SK-N-SH (cell line): ENCODE measurements at regions of chr7 and their contacts with region 1.

Region 1: GRCh38 chr7:1137510-1138167 is 22.4 kb downstream of the ZFAND2A start:
- DNase-seq: no peak
- H3K4me3 ChIP-seq: peak overlapping the region; percentile 68 to 90
- H3K27ac ChIP-seq: peak overlapping the region; percentile 1 to 70; a peak in 2 of 4 replicates
- H3K4me1 ChIP-seq: peaks cover 4 to 19% of the 10 kb centered on the region in 2 experiments; a peak in 2 of 4 replicates
- H3K27me3 ChIP-seq: no peaks in the 10 kb centered on the region
- CTCF ChIP-seq: no peak
- EP300 ChIP-seq: no peak
- RAD21 ChIP-seq: no peak

Region 2: GRCh38 chr7:1123715-1124114 is 13.9 kb before region 1 on chr7:
- CTCF ChIA-PET with region 1: interaction called, 31 read pairs
- POLR2A ChIA-PET with region 1: interaction called, 4 read pairs
- DNase-seq: peak; percentile 79
- H3K4me3 ChIP-seq: no peak overlapping the region
- H3K27ac ChIP-seq: no peak overlapping the region
- H3K4me1 ChIP-seq: 0 out of 4 replicates have a peak, but pooled peaks cover 0 to 8% of the 10 kb centered on the region in 2 experiments
- H3K27me3 ChIP-seq: no peaks in the 10 kb centered on the region
- CTCF ChIP-seq: peak; percentile 49
- EP300 ChIP-seq: no peak
- RAD21 ChIP-seq: peak; percentile 61